Activated CD4-positive, alpha-beta T cell treated with anti-CD3 and anti-CD28 coated beads for 36 hours (primary cell): ENCODE measurements at regions of chr20 and their contacts with region 1.

Region 1: GRCh38 chr20:2873010-2873746 is at the start of gene PTPRA:
- DNase-seq: peak; percentile 96
- ATAC-seq: peak; percentile 91
- H3K4me3 Mint-ChIP-seq: peak within 1 kb of the TSS; percentile 84
- H3K27ac Mint-ChIP-seq: peak within 1 kb of the TSS; percentile 95
- H3K4me1 Mint-ChIP-seq: peaks cover 44% of the 10 kb centered on the region
- H3K27me3 Mint-ChIP-seq: no peaks in the 10 kb centered on the region
- total RNA-seq, gene PTPRA: 58.5 to 86.3 TPM

Region 2: DNA sequence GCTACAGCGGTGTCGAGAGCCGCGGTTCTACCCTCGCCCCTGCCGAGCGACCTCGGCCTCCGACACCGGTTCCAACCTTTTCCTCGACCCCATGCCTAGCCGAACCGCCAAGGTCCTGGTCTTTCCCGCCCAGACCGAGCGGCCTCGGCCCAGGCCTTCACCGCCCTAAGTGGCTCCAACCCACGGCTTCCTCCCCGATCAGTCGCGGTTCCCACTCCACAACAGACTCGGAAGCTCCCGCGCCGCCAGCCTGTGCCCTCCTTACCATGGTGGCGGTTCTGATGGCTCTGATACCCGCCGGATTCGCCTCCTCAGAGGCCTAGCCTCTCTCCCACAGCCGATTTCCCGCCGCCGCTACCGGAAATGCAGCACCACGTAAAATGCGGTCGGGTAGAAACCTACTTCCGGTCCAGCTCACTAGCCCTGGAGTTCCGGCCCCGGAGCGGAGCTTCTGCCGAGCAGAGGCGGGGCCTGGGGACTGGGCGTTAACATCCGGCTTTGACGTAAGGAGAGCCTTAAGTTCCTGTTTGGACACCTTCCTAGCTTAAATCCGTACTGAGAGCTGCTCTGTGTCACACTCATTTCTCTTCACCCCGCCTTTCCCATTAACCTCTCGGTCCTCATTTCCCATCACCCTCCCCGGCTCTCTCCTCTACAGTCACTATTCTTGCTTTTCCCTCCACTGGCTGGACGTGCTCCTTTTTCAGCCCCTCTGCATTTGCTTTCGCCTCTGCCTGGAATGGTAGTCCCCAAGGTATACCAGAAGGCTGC is 402.6 kb before region 1 on chr20 and contains the start of gene SNRPB:
- CTCF ChIA-PET with region 1: no interaction called
- POLR2A ChIA-PET with region 1: no interaction called
- intact Hi-C with region 1: loop called in 1 of 2 experiments (anchors 1 kb)
- DNase-seq: peak; percentile 98
- ATAC-seq: peak; percentile 99
- H3K4me3 Mint-ChIP-seq: peak within 1 kb of the TSS; percentile 96
- H3K27ac Mint-ChIP-seq: peak within 1 kb of the TSS; percentile 100
- H3K4me1 Mint-ChIP-seq: peaks cover 49% of the 10 kb centered on the region
- H3K27me3 Mint-ChIP-seq: no peaks in the 10 kb centered on the region
- total RNA-seq, gene SNRPB: 348 to 466 TPM

Region 3: DNA sequence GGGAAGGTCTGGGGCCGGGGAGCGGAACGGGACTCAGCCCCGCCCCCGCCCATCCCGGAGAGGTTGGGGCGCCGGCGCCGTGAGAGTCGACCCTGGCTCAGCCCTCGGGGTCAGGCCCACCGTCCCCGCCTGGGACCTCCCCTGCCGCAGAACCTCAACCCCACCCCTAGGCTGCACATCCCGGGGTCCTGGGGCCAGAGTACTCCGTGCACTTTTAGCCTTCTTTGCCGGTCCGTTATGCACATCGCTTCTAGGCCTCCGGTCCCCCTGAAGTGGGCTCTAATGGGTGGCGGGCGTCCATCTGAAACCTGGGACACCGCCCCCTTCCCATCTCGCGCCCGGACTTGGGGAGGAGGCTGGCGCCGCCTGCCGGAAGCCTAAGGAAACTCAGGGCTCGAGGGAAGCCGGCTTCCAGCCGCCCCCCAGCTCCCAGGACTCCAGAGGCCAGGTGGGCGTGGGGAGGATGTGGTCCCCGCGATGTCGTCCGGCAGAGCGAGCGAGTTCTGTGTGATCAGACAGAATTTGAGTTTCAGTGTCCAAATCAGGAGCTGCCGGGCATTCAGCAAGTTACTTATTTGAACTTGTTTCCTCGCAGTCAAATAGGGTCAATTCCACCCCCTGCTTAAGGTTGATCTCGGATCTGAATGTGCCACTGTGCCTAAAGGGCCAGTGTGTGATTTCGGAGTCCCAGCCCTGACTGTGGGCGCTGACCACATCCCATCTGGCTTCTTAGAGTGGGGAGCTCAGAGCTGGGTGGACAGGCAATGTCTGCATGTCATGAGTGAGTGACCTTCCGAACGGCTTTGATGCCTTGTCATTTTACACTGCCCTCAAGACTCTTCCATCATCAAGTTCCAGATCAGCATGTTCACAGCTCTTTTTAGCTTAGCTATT is 120.4 kb before region 1 on chr20:
- CTCF ChIA-PET with region 1: no interaction called
- POLR2A ChIA-PET with region 1: no interaction called
- intact Hi-C with region 1: loop called in 1 of 2 experiments (anchors 5 kb)
- DNase-seq: peak; percentile 67
- ATAC-seq: peak; percentile 28
- H3K4me3 Mint-ChIP-seq: peak overlapping the region; percentile 69
- H3K27ac Mint-ChIP-seq: peak overlapping the region; percentile 34
- H3K4me1 Mint-ChIP-seq: peaks cover 32% of the 10 kb centered on the region
- H3K27me3 Mint-ChIP-seq: peaks cover 34% of the 10 kb centered on the region

Region 4: DNA sequence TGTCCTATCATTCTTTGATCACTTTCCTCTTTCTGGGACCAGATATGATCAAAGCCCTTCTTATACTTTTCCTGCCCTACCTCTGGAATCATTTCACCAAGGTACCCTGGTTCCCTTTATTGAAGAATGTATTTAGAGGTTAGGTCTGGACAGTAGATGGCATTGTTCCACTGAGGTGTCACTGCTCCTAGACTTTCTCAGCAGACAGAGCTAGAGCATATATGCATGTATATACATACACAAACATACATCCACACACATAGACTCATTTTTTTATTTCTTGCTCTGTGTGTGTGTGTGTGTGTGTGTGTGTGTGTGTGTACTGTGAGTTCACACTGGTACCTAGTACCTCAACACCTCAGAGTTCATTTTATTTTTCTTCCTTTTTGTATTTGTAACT is 41.0 kb after region 1 on chr20:
- CTCF ChIA-PET with region 1: no interaction called
- POLR2A ChIA-PET with region 1: no interaction called
- intact Hi-C with region 1: loop called (anchors 1 to 2 kb)
- DNase-seq: no peak
- ATAC-seq: peak; percentile 31
- H3K4me3 Mint-ChIP-seq: no peak overlapping the region
- H3K27ac Mint-ChIP-seq: no peak overlapping the region
- H3K4me1 Mint-ChIP-seq: peaks cover 16% of the 10 kb centered on the region
- H3K27me3 Mint-ChIP-seq: no peaks in the 10 kb centered on the region

Region 5: GRCh38 chr20:2972126-2972525 is 98.9 kb after region 1 on chr20:
- CTCF ChIA-PET with region 1: no interaction called
- POLR2A ChIA-PET with region 1: no interaction called
- intact Hi-C with region 1: no loop called
- DNase-seq: no peak
- ATAC-seq: no peak
- H3K4me3 Mint-ChIP-seq: no peak overlapping the region
- H3K27ac Mint-ChIP-seq: no peak overlapping the region
- H3K4me1 Mint-ChIP-seq: peaks cover 10% of the 10 kb centered on the region
- H3K27me3 Mint-ChIP-seq: no peaks in the 10 kb centered on the region

Region 6: DNA sequence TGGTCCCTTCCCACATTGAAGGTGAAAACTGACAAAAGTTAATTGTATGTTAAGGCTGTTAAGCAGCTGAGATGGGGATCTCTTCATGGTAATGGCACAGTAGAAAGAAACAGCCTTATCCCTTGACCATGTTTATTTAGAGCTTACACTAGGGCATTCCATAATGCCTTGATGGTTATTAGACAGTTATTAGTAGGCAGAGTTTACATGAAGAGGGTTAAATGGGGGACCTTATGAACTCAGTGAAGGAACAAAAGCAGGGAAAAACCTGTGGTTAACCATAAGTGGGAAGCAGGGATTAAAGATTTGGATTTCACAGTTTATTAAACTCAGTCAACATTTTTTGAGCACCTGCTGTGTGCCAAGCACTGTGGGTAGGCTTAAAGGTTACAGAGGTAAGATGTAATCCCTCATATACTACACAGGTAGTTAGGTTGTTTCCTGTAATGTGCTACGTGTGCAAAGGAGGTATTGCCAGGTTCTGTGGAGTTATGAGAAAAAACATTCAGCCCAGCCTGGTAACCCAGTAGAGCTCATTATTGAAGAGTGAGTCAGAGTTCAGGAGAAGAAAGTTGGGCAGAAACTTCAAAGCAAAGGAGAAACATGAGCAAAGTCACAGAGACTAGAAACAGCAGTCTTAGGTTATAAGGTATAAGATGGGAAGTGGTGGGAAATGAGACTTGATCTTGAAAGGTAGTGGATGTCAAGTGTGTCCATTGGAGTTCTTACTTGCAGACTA is 138.0 kb after region 1 on chr20:
- CTCF ChIA-PET with region 1: interaction called, 5 read pairs
- POLR2A ChIA-PET with region 1: interaction called, 5 read pairs
- intact Hi-C with region 1: loop called in 1 of 2 experiments (anchors 1 kb)
- DNase-seq: peak; percentile 46
- ATAC-seq: peak; percentile 69
- H3K4me3 Mint-ChIP-seq: peak overlapping the region; percentile 37
- H3K27ac Mint-ChIP-seq: peak overlapping the region; percentile 94
- H3K4me1 Mint-ChIP-seq: peaks cover 70% of the 10 kb centered on the region
- H3K27me3 Mint-ChIP-seq: no peaks in the 10 kb centered on the region

Region 7: DNA sequence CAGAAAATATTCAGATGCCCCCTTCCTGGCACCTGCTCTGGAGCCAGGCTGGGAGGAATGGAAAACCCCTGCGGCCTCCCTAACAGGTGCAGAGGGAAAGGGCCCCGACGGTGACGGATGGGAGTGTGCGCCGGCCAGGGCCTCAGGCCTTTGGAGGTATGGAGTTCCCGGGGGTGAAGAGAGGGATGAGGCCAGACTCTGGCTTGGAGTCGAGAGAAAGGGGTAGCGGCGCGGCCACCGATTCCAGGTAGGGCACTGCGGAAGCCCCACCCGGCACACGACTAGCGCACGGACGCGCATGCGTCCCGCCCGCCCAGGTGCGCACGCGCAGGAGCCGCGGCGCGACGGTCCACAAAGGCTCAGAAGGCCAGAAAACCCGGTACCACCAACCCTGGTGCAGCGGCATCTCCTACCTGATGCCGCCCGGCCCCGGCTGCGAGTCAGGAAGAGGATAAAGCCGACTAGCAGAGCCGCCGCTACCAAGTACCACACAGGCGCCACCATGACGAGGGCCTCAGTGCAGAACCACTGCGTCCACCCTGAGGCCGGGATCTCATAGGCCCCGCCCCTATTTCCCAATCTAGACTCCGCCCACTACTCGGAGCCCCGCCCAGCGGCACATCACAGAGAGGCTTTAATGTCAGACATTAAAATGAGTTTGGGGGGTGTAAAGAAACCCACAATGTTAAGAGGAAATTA is 331.1 kb after region 1 on chr20 and contains the start of gene DDRGK1:
- CTCF ChIA-PET with region 1: no interaction called
- POLR2A ChIA-PET with region 1: no interaction called
- intact Hi-C with region 1: loop called in 1 of 2 experiments (anchors 5 kb)
- DNase-seq: peak; percentile 94
- ATAC-seq: peak; percentile 91
- H3K4me3 Mint-ChIP-seq: peak within 1 kb of the TSS; percentile 92
- H3K27ac Mint-ChIP-seq: peak within 1 kb of the TSS; percentile 98
- H3K4me1 Mint-ChIP-seq: peaks cover 12% of the 10 kb centered on the region
- H3K27me3 Mint-ChIP-seq: no peaks in the 10 kb centered on the region
- total RNA-seq, gene DDRGK1: 49.3 to 52.2 TPM

Region 8: GRCh38 chr20:3374296-3374695 is 501.1 kb after region 1 on chr20:
- CTCF ChIA-PET with region 1: no interaction called
- POLR2A ChIA-PET with region 1: no interaction called
- intact Hi-C with region 1: no loop called
- DNase-seq: no peak
- ATAC-seq: no peak
- H3K4me3 Mint-ChIP-seq: no peak overlapping the region
- H3K27ac Mint-ChIP-seq: no peak overlapping the region
- H3K4me1 Mint-ChIP-seq: no peaks in the 10 kb centered on the region
- H3K27me3 Mint-ChIP-seq: no peaks in the 10 kb centered on the region